Aorta (tissue), 5 donors: ENCODE measurements at regions of chr6 and their contacts with region 1.

Region 1: DNA sequence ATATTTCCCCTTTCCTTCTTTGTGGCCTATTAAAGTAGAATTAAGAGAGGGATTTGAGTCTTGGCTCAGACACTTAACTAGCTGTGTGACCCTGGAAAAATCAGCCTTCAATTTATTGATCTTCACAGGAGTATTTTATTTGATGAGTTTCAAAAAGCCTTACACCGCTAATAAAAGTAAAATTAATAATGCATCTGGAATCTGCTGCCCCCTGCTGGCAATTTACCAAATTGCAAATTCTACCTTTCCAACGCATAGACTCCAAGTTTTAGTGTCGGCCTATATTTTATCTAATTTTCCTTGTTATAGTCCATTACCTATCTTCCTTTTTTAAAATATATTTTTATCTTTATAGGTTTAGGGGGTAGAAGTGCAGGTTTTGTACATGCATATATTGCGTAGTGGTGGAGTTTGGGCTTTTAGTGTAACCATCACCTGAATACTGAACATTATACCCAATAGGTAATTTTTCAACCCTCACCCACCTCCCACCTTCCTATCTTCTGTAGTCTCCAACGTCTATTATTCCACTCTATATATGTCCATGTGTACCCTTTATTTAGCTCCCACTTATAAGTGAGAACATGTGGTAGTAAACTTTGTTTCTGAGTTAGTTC is 46.3 kb downstream of the GOPC start:
- DNase-seq: no peak
- ATAC-seq: peak; percentile 62
- H3K4me3 ChIP-seq: no peak overlapping the region
- H3K27ac ChIP-seq: no peak overlapping the region
- H3K4me1 ChIP-seq: no peaks in the 10 kb centered on the region
- H3K27me3 ChIP-seq: no peaks in the 10 kb centered on the region

Region 2: DNA sequence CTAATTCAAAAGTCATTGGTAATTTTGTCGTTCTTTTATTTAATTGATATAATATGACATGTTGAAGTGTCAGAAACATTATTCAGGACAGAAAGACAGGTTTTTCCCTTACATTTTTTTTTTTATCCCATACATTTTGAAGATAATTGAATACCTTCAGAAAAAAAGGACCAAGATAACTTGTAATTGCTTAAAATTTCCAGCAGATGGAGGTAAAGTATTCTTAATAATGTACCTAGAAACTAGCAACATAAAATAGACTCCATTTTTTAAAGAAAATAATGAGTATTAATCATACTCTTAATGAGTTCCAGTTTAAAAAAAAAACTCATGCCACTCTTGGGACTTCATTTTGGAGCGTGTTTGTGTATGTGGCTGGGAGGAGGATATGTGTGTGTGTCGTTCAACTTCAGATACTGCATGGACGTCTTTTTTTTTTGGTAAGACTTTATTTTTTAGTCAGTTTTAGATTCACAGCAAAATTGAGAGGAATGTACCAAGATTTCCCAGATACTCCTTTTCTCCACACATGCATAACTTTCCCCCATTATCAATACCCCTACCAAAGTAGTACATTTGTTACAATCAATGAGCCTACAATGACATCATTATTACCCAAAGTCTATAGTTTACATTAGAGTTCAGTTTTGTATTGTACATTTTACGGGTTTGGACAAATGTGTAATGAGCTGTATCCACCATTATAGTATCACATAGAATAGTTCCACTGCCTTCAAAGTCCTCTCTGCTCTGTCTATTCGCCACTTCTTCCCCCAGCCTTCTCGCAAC is 209.7 kb before region 1 on chr6:
- intact Hi-C with region 1: loop called (anchors 5 kb)
- DNase-seq: no peak
- ATAC-seq: peak; percentile 74
- H3K4me3 ChIP-seq: peak overlapping the region in 1 of 2 donors; percentile 54
- H3K27ac ChIP-seq: no peak overlapping the region
- H3K4me1 ChIP-seq: no peaks in the 10 kb centered on the region
- H3K27me3 ChIP-seq: no peaks in the 10 kb centered on the region